Activated T-helper 1 cell treated with anti-CD3 and anti-CD28 coated beads, Interleukin-12 subunit alpha, Interleukin-12 subunit beta, Interleukin-2, Interleukin-4 antibody, amounts not matched to agents 30 ng/mL and 10 ng/mL and 1 ng/mL, durations not matched to agents 14 hours and 24 hours and 36 hours (primary cell): ENCODE measurements at regions of chr14 and their contacts with region 1.

Region 1: GRCh38 chr14:104677512-104678332 is 11.7 kb upstream of the INF2 start:
- DNase-seq: peak; percentile 69
- H3K4me3 Mint-ChIP-seq: peak overlapping the region; percentile 73
- H3K27ac Mint-ChIP-seq: peak overlapping the region; percentile 90
- H3K4me1 Mint-ChIP-seq: peaks cover 22% of the 10 kb centered on the region
- H3K27me3 Mint-ChIP-seq: peaks cover 5% of the 10 kb centered on the region

Region 2: GRCh38 chr14:104650057-104650981 is 27.4 kb before region 1 on chr14:
- intact Hi-C with region 1: loop called (anchors 1 kb)
- DNase-seq: peak; percentile 49
- H3K4me3 Mint-ChIP-seq: no peak overlapping the region
- H3K27ac Mint-ChIP-seq: no peak overlapping the region
- H3K4me1 Mint-ChIP-seq: no peaks in the 10 kb centered on the region
- H3K27me3 Mint-ChIP-seq: peaks cover 13% of the 10 kb centered on the region

Region 3: DNA sequence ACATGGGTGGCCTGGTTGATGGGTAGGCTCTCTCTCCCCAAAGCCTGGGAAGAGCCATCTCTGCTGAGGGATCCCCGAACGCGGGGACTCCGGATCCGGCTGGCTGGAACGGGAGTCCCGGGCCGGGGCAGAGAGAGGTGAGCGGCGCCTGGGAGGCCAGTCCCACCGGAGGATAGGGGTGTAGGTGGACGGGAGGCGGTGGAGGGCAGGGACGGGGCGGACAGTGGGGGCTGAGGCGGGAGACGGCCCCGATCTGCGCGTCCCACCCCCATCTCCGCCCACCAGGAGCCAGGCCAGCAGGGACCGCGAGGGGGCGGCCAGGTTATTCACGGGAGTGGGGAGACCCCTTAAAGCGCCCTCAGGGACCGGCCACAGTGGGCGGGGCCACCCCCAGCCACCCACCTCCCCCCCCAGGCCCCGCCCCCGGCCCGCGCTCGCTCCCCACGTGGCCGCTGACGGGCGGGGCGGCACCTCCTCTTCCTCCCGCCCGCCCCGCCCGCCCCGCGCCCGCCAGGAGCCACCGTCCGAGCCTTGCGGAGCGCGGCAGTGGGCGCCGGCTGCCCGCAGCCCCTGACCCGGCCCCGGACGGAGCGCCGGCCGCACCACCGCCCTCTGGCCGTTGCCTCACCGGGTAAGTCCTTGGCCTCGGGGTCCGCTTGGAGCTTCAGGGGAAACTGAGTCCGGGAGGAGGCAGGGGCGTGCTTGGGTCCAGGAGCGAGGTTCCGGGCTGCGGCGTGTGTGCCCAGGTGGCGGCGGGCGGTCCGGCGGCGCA is 11.6 kb after region 1 on chr14 and contains the start of gene INF2:
- intact Hi-C with region 1: loop called (anchors 1 kb)
- DNase-seq: peak; percentile 27
- H3K4me3 Mint-ChIP-seq: peak within 1 kb of the TSS; percentile 85
- H3K27ac Mint-ChIP-seq: no peak within 1 kb of the TSS
- H3K4me1 Mint-ChIP-seq: peaks cover 44% of the 10 kb centered on the region
- H3K27me3 Mint-ChIP-seq: no peaks in the 10 kb centered on the region
- total RNA-seq, gene INF2: 86.6 and 91.6 TPM in 2 replicates

Region 4: DNA sequence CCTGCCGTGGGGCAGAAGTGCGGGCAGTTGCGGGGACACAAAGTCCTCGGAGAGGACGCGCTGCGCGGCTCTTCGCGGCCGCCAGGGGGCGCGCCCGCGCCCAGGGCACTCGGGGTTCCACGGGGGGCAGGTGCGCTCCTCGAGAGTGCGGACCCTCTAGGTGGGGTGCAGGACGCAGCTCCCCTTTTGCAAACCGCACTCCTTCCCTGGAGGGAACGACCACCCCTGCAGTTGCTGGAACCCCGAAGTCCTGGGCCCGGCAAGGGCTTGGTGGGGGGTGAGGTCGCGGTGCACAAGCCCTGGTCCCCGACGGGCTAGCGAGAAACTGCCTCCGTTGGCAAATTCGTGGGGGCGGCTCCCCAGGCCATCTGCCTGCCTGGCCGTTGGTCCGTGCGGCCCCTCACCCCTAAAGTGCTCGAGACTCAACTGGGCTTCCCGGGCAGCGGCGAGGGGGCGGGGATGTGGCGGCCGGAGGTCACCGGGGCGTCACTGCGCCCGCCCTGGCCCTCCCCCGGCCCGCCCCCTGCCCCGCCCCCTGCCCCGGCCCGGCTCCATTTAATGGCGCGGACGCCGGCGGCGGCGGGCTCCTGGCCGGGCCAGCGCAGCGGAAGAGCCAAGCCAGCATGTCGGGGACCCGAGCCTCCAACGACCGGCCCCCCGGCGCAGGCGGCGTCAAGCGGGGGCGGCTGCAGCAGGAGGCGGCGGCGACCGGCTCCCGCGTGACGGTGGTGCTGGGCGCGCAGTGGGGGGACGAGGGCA is 46.1 kb after region 1 on chr14 and contains the start of gene ADSS1:
- intact Hi-C with region 1: loop called (anchors 1 kb)
- DNase-seq: peak; percentile 50
- H3K4me3 Mint-ChIP-seq: peak within 1 kb of the TSS; percentile 59
- H3K27ac Mint-ChIP-seq: no peak within 1 kb of the TSS
- H3K4me1 Mint-ChIP-seq: no peaks in the 10 kb centered on the region
- H3K27me3 Mint-ChIP-seq: no peaks in the 10 kb centered on the region
- total RNA-seq, gene ADSS1: 1.1 and 1.2 TPM in 2 replicates